Ovary (tissue), 10 donors: ENCODE measurements at regions of chr7 and their contacts with region 1.

Region 1: GRCh38 chr7:131071786-131072504 is 255.7 kb upstream of the MKLN1 start:
- DNase-seq: peak; percentile 42 to 69 (median 57)
- H3K4me3 ChIP-seq: no peak overlapping the region
- H3K27ac ChIP-seq: peak overlapping the region in 1 of 2 donors; percentile 58
- H3K4me1 ChIP-seq: peaks cover 19% of the 10 kb centered on the region
- H3K27me3 ChIP-seq: no peaks in the 10 kb centered on the region
- CTCF ChIP-seq: peak in 2 of 3 donors; percentile 18 to 19
- EP300 ChIP-seq: peak; percentile 58
- POLR2A ChIP-seq: no peak

Region 2: DNA sequence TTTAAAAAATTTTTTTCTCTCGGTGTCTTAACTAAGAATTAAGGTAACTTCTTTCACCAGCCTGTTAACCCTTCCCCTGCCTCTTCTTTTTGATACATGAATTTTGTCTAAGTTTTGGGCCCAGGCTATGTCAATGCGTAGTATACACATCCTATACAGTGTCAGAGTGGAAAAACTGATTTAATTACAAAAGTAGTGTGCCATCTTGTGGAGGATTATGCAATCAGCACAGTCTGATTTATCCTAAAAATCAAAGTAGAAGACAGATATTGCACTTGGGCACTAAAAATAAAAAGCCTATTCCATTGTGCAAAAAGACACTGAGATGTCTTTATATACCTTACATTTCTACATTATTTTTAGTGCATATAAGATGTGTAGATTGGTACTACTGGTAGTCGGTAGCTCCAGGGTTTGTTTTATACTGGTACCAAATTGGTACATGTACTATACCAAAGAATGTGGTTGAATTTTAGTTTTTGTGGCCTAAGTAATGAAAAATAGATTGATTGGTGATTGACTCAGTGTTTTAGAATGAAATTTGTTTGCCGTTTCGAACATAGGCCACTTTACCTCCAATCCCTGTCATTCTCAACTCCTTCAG is 352.4 kb after region 1 on chr7:
- intact Hi-C with region 1: loop called in 1 of 4 experiments (anchors 10 kb)
- DNase-seq: no peak
- H3K4me3 ChIP-seq: no peak overlapping the region
- H3K27ac ChIP-seq: no peak overlapping the region
- H3K4me1 ChIP-seq: no peaks in the 10 kb centered on the region
- H3K27me3 ChIP-seq: no peaks in the 10 kb centered on the region
- CTCF ChIP-seq: peak in 2 of 3 donors; percentile 34 to 65
- EP300 ChIP-seq: no peak
- POLR2A ChIP-seq: no peak

Region 3: GRCh38 chr7:131507592-131508331 is 435.8 kb after region 1 on chr7:
- intact Hi-C with region 1: loop called in 1 of 4 experiments (anchors 10 kb)
- DNase-seq: peak; percentile 82 to 93 (median 88)
- H3K4me3 ChIP-seq: no peak overlapping the region
- H3K27ac ChIP-seq: no peak overlapping the region
- H3K4me1 ChIP-seq: peaks cover 12% of the 10 kb centered on the region
- H3K27me3 ChIP-seq: no peaks in the 10 kb centered on the region
- CTCF ChIP-seq: peak; percentile 86 to 93 (median 91)
- EP300 ChIP-seq: no peak
- POLR2A ChIP-seq: no peak